GM12878 (cell line): ENCODE measurements at regions of chr12 and their contacts with region 1.

Region 1: GRCh38 chr12:4421590-4422031 is 24.0 kb downstream of the FGF6 start:
- DNase-seq: no peak
- ATAC-seq: peak; percentile 69
- H3K4me3 ChIP-seq: no peak overlapping the region
- H3K27ac ChIP-seq: no peak overlapping the region
- H3K4me1 ChIP-seq: no peaks in the 10 kb centered on the region
- H3K27me3 ChIP-seq: peaks cover 0 to 3% of the 10 kb centered on the region in 2 experiments; a peak in 3 of 4 replicates
- CTCF ChIP-seq: peak; percentile 51 to 62 (median 57); a peak in 5 of 6 replicates
- EP300 ChIP-seq: no peak
- POLR2A ChIP-seq: no peak
- RAD21 ChIP-seq: peak; percentile 59

Region 2: DNA sequence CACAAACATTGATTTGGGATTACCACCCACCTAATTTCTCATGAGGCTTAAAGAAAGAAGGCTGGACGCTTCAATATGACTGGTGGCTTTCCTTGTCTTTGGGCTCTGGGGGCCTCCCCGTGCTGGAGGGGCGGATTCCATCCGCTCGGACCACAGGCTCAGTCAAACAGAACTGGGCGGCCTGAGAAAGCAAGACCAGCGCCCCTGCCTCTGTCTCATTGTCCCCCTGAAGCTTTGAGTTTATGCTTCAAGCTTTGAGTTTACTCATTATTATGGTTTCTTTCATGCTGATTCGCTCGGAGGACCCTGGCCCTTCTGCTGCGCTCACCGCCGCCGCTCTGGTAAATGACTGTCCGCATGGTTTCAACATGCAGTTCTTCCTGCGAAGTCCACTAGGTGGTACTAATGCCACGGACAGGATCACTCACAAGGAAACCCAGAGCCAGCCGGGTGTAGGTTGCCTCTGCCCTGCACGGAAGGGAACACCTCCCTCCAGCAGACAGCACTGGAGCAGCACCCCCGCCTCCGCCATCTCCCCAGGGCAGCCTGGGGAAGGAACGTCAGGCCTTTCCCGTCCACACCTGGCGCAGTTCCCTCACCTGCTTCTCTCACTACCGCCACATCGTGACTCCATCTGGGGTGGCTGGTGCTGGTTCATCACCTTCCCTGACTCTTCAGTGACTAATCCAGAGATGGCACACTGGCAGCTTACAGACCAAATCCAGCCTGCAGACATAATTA is 113.8 kb before region 1 on chr12:
- CTCF ChIA-PET with region 1: no interaction called
- POLR2A ChIA-PET with region 1: no interaction called
- RAD21 ChIA-PET with region 1: no interaction called
- SMC1A ChIA-PET with region 1: no interaction called
- in situ Hi-C with region 1: no loop called
- intact Hi-C with region 1: no loop called
- DNase-seq: no peak
- ATAC-seq: peak; percentile 73
- H3K4me3 ChIP-seq: no peak overlapping the region
- H3K27ac ChIP-seq: no peak overlapping the region
- H3K4me1 ChIP-seq: peaks cover 6% of the 10 kb centered on the region; the same call in 1 of the 2 replicates
- H3K27me3 ChIP-seq: no peaks in the 10 kb centered on the region
- CTCF ChIP-seq: peak; percentile 34 to 51 (median 41); a peak in 4 of 6 replicates
- EP300 ChIP-seq: no peak
- POLR2A ChIP-seq: no peak
- RAD21 ChIP-seq: peak; percentile 60

Region 3: GRCh38 chr12:4432878-4433739 is 11.5 kb after region 1 on chr12:
- CTCF ChIA-PET with region 1: interaction called, 17 read pairs
- POLR2A ChIA-PET with region 1: no interaction called
- RAD21 ChIA-PET with region 1: interaction called, 3 read pairs
- SMC1A ChIA-PET with region 1: no interaction called
- in situ Hi-C with region 1: no loop called
- intact Hi-C with region 1: no loop called
- DNase-seq: no peak
- ATAC-seq: no peak
- H3K4me3 ChIP-seq: no peak overlapping the region
- H3K27ac ChIP-seq: no peak overlapping the region
- H3K4me1 ChIP-seq: no peaks in the 10 kb centered on the region
- H3K27me3 ChIP-seq: no peaks in the 10 kb centered on the region; a peak in 1 of 4 replicates
- CTCF ChIP-seq: no peak
- EP300 ChIP-seq: no peak
- POLR2A ChIP-seq: no peak
- RAD21 ChIP-seq: no peak